ENCODE measurements at regions of chr5 and their contacts with region 1.

Region 1: DNA sequence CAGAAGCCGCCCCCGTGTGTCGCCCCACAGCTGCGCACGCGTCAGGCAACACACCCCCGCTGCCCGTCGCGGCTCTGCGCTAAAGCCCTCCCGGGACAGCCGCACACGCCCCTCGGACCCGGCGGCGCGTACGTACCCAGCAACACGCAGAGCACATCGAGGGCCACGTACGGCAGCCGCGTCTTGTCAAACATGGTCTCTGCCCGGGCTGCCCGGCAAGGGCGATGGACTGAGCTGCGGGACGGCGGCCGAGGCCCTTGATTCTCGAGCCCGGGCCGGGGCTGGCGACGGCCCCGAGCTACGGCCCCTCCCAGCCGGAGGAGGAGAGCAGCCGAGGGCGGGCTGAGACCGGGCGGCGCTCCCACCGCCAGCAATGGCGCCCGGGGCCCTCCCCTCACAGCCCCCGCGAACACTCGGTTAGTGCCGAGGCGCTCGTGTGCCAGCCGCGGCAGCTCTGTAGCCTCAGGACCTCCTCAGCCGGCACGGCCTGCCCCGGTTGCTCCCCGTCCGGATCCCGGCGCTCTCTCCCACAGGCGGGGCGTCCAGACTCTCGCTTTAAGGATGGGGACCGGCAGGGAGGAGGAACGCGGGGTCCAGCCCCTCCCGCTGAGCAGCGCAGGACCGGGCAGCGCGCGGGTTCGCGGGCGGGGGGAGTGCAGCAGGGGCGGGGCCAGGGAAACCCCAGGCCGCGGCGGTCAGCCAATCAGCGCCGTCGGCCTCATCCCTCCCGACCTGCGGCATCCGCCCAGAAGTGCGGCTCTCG is at the start of gene PLPP1:
- DNase-seq: peak; percentile 96
- total RNA-seq, gene PLPP1: 274 to 337 TPM

Region 2: GRCh38 chr5:55471468-55471867 is 63.1 kb before region 1 on chr5:
- intact Hi-C with region 1: loop called in 1 of 2 experiments (anchors 5 kb)
- DNase-seq: no peak